ENCODE measurements at regions of chr4 and their contacts with region 1.

Region 1: GRCh38 chr4:40515398-40516293 is 114.0 kb downstream of the RBM47 start:
- DNase-seq: peak; percentile 65
- H3K4me3 Mint-ChIP-seq: peak overlapping the region; percentile 1
- H3K27ac Mint-ChIP-seq: peak overlapping the region; percentile 63
- H3K4me1 Mint-ChIP-seq: peaks cover 28% of the 10 kb centered on the region
- H3K27me3 Mint-ChIP-seq: no peaks in the 10 kb centered on the region

Region 2: GRCh38 chr4:40438384-40439026 is 77.1 kb before region 1 on chr4:
- intact Hi-C with region 1: loop called (anchors 1 kb)
- DNase-seq: no peak
- H3K4me3 Mint-ChIP-seq: peak overlapping the region; percentile 33
- H3K27ac Mint-ChIP-seq: no peak overlapping the region
- H3K4me1 Mint-ChIP-seq: peaks cover 51% of the 10 kb centered on the region
- H3K27me3 Mint-ChIP-seq: no peaks in the 10 kb centered on the region

Region 3: DNA sequence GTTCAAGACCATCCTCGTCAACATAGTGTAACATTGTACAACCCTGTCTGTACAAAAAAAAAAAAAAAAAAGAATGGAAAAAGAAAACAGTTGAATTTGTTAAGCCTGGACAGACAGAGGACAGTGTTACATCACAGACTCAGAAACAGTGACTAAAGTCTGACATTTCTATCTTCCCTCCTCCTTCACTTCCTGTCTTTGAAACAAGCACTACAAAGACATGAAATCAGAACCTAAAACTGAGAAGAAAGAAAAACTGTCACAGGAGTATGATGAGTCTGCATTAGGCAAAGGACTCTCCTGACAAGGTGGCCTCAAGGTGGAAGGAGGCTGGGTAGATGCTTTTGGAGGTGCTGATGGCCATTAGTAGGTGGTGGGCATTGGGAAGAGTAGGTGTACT is 12.7 kb before region 1 on chr4:
- intact Hi-C with region 1: loop called (anchors 1 kb)
- DNase-seq: peak; percentile 63
- H3K4me3 Mint-ChIP-seq: peak overlapping the region; percentile 60
- H3K27ac Mint-ChIP-seq: peak overlapping the region; percentile 87
- H3K4me1 Mint-ChIP-seq: peaks cover 19% of the 10 kb centered on the region
- H3K27me3 Mint-ChIP-seq: no peaks in the 10 kb centered on the region